Mucosa of descending colon (tissue), 3 donors: ENCODE measurements at regions of chr2 and their contacts with region 1.

Region 1: GRCh38 chr2:235746257-235747084 is 252.6 kb downstream of the AGAP1 start:
- DNase-seq: peak in 2 of 3 donors; percentile 58 to 63
- ATAC-seq: peak; percentile 92
- H3K4me3 ChIP-seq: no peak overlapping the region
- H3K4me1 ChIP-seq: peaks cover 7% of the 10 kb centered on the region
- CTCF ChIP-seq: peak; percentile 59

Region 2: GRCh38 chr2:235135990-235136561 is 610.4 kb before region 1 on chr2:
- intact Hi-C with region 1: loop called in 1 of 2 experiments (anchors 10 kb)
- DNase-seq: peak; percentile 68 to 95 (median 85)
- ATAC-seq: peak; percentile 96
- H3K4me3 ChIP-seq: no peak overlapping the region
- H3K4me1 ChIP-seq: peaks cover under 1% of the 10 kb centered on the region
- CTCF ChIP-seq: peak; percentile 56

Region 3: DNA sequence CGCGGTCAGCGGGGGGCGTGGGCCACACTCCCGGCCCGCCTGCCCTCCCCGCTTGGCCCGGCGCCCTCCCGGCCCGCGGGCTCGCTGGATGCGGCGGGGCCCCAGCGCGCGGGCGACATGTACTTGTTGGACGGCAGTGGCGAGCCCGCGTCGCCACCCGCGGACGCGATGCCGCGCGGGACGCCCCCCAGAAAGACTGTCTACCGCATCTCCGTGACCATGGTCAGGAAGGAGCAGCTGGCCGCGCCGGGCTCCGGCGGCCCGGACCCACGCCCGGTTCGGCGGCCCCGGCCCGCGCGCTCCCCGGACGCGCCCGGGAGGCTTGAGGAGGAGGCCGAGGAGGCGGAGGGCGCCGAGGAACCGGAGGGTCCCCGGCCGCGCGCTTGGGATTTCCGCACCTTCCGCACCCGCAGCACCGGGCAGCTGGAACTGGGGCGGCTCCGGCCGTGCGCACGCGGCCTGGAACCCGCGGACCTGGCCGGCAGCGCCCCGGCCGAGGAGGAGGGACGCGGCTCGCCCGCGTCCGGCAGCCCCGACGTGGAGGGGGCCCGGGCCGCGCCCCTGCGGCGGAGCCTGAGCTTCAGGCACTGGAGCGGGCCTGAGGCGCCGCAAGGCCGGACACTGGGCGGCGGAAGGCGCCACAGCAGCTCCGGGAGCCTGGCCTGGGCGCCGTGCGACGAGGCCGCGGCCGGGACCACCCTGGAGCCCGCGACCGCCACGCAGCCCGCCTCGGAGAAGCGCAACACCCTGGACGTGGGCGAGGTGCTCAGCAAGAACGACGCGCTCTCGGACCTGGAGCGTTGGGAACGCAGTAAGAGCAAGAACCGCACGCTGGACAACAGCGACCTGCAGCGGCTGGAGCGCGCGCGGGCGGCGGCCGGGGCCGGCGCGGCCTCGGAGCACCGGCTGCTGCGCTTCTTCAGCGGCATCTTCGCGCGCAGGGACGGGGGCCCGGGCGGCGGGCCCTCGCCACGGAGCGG is 76.2 kb before region 1 on chr2:
- intact Hi-C with region 1: loop called in 1 of 2 experiments (anchors 10 kb)
- DNase-seq: peak; percentile 67 to 76 (median 69)
- ATAC-seq: peak; percentile 79
- H3K4me3 ChIP-seq: peak overlapping the region; percentile 24
- H3K4me1 ChIP-seq: peaks cover 14% of the 10 kb centered on the region
- CTCF ChIP-seq: peak; percentile 57

Region 4: GRCh38 chr2:235864733-235865515 is 118.5 kb after region 1 on chr2:
- intact Hi-C with region 1: no loop called
- DNase-seq: no peak
- ATAC-seq: no peak
- H3K4me3 ChIP-seq: no peak overlapping the region
- H3K4me1 ChIP-seq: no peaks in the 10 kb centered on the region
- CTCF ChIP-seq: no peak